Dendritic cell treated with granulocyte-macrophage colony-stimulating factor and Interleukin-4, amounts not matched to agents 40 ng/mL and 50 ng/mL, for 4 days (primary cell): ENCODE measurements at regions of chr11 and their contacts with region 1.

Region 1: DNA sequence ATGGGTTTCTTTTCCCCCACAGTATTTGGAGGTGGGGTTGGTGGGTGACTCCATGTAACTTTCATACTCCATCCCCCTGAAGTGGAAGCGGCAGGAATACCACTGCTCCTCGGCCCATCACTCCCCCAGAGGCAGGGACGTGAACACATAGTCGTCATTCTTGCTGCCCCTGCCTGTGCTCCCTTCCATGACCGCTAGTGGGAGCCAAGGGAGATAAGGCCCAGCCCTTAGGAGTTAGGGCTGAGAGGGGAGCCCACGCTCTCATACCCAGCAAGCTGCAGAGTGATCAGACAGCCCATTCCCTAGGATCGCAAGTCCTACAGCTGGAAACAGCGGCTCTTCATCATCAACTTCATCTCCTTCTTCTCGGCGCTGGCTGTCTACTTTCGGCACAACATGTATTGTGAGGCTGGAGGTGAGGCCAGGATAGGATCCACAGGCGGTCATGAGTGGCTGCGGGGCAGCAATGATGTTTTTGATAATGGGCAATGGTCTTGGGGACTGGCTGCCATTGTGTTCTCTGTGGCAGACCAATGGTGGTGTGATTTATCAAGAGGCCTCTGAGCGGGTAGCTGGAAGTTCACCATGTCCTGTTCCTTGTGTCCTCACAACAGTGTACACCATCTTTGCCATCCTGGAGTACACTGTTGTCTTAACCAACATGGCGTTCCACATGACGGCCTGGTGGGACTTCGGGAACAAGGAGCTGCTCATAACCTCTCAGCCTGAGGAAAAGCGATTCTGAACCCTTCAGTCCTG is 15.9 kb downstream of the RHOG start:
- H3K4me3 Mint-ChIP-seq: no peak overlapping the region
- H3K27ac Mint-ChIP-seq: peak overlapping the region; percentile 77
- H3K4me1 Mint-ChIP-seq: peaks cover 70% of the 10 kb centered on the region
- H3K27me3 Mint-ChIP-seq: no peaks in the 10 kb centered on the region

Region 2: GRCh38 chr11:3841426-3842350 is 16.8 kb after region 1 on chr11:
- intact Hi-C with region 1: loop called (anchors 2 kb)
- H3K4me3 Mint-ChIP-seq: peak overlapping the region; percentile 91
- H3K27ac Mint-ChIP-seq: peak overlapping the region; percentile 100
- H3K4me1 Mint-ChIP-seq: peaks cover 48% of the 10 kb centered on the region
- H3K27me3 Mint-ChIP-seq: no peaks in the 10 kb centered on the region